ENCODE measurements at regions of chr1 and their contacts with region 1.

Region 1: GRCh38 chr1:206725109-206725963 is 40.6 kb downstream of the MAPKAPK2 start:
- DNase-seq: peak in 4 of 5 donors; percentile 46 to 64 (median 49)
- H3K4me3 ChIP-seq: no peak overlapping the region
- H3K4me3 Mint-ChIP-seq: peak overlapping the region in 5 of 7 donors; percentile 6 to 44 (median 16)
- H3K27ac ChIP-seq: no peak overlapping the region
- H3K27ac Mint-ChIP-seq: peak overlapping the region; percentile 37 to 83 (median 68)
- H3K4me1 ChIP-seq: peaks cover 23% of the 10 kb centered on the region
- H3K4me1 Mint-ChIP-seq: peaks cover 68 to 76% (median 72%) of the 10 kb centered on the region in 3 donors
- H3K27me3 ChIP-seq: no peaks in the 10 kb centered on the region
- H3K27me3 Mint-ChIP-seq: peaks cover 0 to 3% of the 10 kb centered on the region in 2 donors

Region 2: GRCh38 chr1:206714331-206715058 is 10.8 kb before region 1 on chr1:
- CTCF ChIA-PET with region 1: interaction called, 42 read pairs
- POLR2A ChIA-PET with region 1: no interaction called
- DNase-seq: peak in 4 of 5 donors; percentile 37 to 73 (median 50)
- H3K4me3 ChIP-seq: peak overlapping the region; percentile 11
- H3K4me3 Mint-ChIP-seq: peak overlapping the region; percentile 18 to 85 (median 78)
- H3K27ac ChIP-seq: peak overlapping the region; percentile 10
- H3K27ac Mint-ChIP-seq: peak overlapping the region; percentile 79 to 100 (median 94)
- H3K4me1 ChIP-seq: peaks cover 70% of the 10 kb centered on the region
- H3K4me1 Mint-ChIP-seq: peaks cover 83 to 94% (median 92%) of the 10 kb centered on the region in 3 donors
- H3K27me3 ChIP-seq: no peaks in the 10 kb centered on the region
- H3K27me3 Mint-ChIP-seq: peaks cover 0 to 3% of the 10 kb centered on the region in 2 donors

Region 3: GRCh38 chr1:206803221-206803730 is 77.9 kb after region 1 on chr1:
- CTCF ChIA-PET with region 1: interaction called, 232 read pairs
- POLR2A ChIA-PET with region 1: no interaction called
- DNase-seq: peak; percentile 63 to 94 (median 91)
- H3K4me3 ChIP-seq: no peak overlapping the region
- H3K4me3 Mint-ChIP-seq: peak overlapping the region; percentile 2 to 73 (median 27)
- H3K27ac ChIP-seq: peak overlapping the region; percentile 41
- H3K27ac Mint-ChIP-seq: peak overlapping the region; percentile 85 to 99 (median 96)
- H3K4me1 ChIP-seq: peaks cover 55% of the 10 kb centered on the region
- H3K4me1 Mint-ChIP-seq: peaks cover 56 to 74% (median 73%) of the 10 kb centered on the region in 3 donors
- H3K27me3 ChIP-seq: no peaks in the 10 kb centered on the region
- H3K27me3 Mint-ChIP-seq: peaks cover 0 to 2% of the 10 kb centered on the region in 2 donors

Region 4: GRCh38 chr1:206808615-206809014 is 83.3 kb after region 1 on chr1:
- CTCF ChIA-PET with region 1: interaction called, 232 read pairs
- POLR2A ChIA-PET with region 1: no interaction called
- DNase-seq: peak; percentile 7 to 69 (median 67)
- H3K4me3 ChIP-seq: no peak overlapping the region
- H3K4me3 Mint-ChIP-seq: no peak overlapping the region
- H3K27ac ChIP-seq: no peak overlapping the region
- H3K27ac Mint-ChIP-seq: peak overlapping the region in 7 of 8 donors; percentile 9 to 85 (median 79)
- H3K4me1 ChIP-seq: peaks cover 38% of the 10 kb centered on the region
- H3K4me1 Mint-ChIP-seq: peaks cover 31 to 46% (median 43%) of the 10 kb centered on the region in 3 donors
- H3K27me3 ChIP-seq: no peaks in the 10 kb centered on the region
- H3K27me3 Mint-ChIP-seq: peaks cover 0 to 1% of the 10 kb centered on the region in 2 donors

Region 5: DNA sequence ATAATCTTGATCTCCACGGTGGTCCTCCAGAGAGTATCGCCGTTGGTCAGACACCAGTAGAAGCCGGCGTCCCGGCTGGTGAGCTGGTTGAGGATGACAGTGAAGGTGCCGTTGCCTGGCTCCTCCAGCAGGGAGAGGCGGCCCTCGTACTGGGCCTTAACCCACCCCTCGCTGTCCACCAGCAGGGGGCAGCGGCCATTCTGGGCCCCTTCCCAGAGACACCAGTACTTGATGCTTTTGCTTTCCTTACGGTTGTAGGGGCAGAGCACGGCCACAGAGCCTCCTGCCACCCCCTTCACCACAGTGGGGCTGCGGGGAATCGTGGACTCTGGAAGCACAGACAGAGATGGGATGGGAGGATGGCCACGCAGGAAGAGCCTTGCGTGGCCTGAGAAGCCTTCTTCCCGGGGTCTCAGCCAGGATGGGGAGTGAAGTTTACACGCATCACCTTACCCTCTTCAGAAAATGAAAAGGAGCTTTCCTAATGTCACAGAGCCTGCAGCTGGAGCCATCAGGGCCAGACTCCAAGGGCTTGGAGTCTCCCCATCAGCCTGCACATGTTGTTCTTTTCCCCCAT is 210.2 kb after region 1 on chr1:
- CTCF ChIA-PET with region 1: interaction called, 14 read pairs
- POLR2A ChIA-PET with region 1: no interaction called
- DNase-seq: peak in 3 of 5 donors; percentile 13 to 49 (median 18)
- H3K4me3 ChIP-seq: no peak overlapping the region
- H3K4me3 Mint-ChIP-seq: no peak overlapping the region
- H3K27ac ChIP-seq: no peak overlapping the region
- H3K27ac Mint-ChIP-seq: no peak overlapping the region
- H3K4me1 ChIP-seq: peaks cover 16% of the 10 kb centered on the region
- H3K4me1 Mint-ChIP-seq: peaks cover 18 to 25% (median 24%) of the 10 kb centered on the region in 3 donors
- H3K27me3 ChIP-seq: no peaks in the 10 kb centered on the region
- H3K27me3 Mint-ChIP-seq: peaks cover 0 to 4% of the 10 kb centered on the region in 2 donors

Measured in CD8-positive, alpha-beta memory T cell (primary cell).